ENCODE measurements at regions of chr4 and their contacts with region 1.

Region 1: DNA sequence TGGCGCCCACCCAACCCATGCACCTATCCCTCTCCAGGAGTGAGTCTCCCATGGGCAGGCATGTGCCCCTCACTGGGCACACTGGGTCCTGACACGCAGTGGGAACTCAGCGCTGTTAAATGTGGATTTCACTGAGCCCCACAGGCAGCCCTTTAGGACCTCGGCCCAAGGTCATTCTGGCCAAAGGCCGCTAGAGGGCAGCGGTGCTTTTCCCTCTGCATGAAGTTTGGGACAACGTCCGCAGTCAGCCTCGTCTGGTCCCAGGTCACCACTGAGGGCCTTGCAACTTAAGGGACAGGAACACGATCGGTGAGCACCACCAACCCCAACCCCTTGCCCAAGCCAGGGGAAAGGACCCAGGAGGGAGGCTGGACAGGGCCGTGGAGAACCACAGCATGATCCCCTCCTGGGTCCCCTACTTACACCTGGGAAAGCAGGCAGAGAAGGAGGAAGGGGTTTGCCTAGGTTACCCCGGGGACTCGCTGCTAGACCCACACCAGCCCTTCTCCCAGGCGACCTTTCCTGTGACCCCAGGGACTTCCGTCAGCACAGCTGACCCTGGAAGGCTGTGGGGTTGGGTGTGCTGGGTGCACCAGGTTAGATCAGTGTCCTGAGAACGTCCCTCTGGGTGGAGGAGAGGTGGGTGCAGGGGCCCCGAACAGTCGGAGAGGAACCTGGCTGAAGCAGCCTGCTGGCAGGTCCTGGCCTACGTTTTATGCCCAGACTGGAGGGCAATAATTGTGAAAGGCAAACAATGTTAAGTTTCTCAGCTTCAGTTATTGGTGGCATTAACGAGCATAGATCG is 24.0 kb downstream of the CYTL1 start:
- DNase-seq: peak; percentile 62
- ATAC-seq: peak; percentile 47
- H3K4me3 Mint-ChIP-seq: no peak overlapping the region
- H3K27ac Mint-ChIP-seq: no peak overlapping the region
- H3K4me1 Mint-ChIP-seq: peaks cover 3% of the 10 kb centered on the region
- H3K27me3 Mint-ChIP-seq: peaks cover 10% of the 10 kb centered on the region
- CTCF ChIP-seq: peak; percentile 81

Region 2: DNA sequence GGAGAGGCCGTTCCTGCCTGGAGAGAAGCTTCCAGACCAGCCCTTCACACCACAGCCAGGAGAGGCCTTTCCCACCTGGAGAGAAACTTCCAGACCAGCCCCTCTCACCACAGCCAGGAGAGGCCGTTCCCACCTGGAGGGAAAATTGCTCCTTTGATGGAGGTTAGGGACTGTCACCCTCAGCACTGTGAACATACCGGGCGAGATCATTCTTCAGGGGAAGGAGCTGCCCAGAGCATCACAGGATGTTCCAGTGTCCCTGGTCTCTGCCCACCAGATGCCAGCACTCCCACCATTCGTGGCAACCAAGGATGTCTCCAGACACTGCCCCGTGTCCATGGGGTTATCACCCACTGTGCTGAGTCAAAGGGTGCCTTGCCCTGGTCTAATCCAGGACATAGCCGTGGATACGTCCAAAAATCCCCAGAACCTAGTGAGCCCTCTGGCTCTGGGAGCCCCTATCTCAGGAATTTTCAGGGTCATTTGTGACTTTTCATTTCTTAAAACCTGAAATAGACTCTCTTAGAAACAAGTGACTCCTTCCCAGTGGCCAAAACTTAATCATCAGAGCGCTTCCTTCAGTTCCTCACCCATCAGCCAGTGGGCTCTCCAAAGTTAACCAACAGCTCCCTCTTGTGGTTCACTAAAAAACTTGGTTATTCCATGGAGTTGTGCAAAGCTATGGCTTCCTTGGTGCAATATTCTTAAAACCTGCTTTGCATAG is 817.4 kb after region 1 on chr4:
- CTCF ChIA-PET with region 1: no interaction called
- POLR2A ChIA-PET with region 1: no interaction called
- intact Hi-C with region 1: loop called (anchors 5 kb)
- DNase-seq: peak; percentile 20
- ATAC-seq: peak; percentile 53
- H3K4me3 Mint-ChIP-seq: no peak overlapping the region
- H3K27ac Mint-ChIP-seq: no peak overlapping the region
- H3K4me1 Mint-ChIP-seq: no peaks in the 10 kb centered on the region
- H3K27me3 Mint-ChIP-seq: no peaks in the 10 kb centered on the region
- CTCF ChIP-seq: peak; percentile 70

Measured in activated CD8-positive, alpha-beta T cell treated with anti-CD3 and anti-CD28 coated beads for 36 hours (primary cell).